Ovary (tissue), 10 donors: ENCODE measurements at regions of chr10 and their contacts with region 1.

Region 1: GRCh38 chr10:98242823-98243222 is 25.2 kb downstream of the LOXL4 start:
- DNase-seq: no peak
- H3K4me3 ChIP-seq: no peak overlapping the region
- H3K27ac ChIP-seq: no peak overlapping the region
- H3K4me1 ChIP-seq: no peaks in the 10 kb centered on the region
- H3K27me3 ChIP-seq: no peaks in the 10 kb centered on the region
- CTCF ChIP-seq: peak in 2 of 3 donors; percentile 15 to 31
- EP300 ChIP-seq: no peak
- POLR2A ChIP-seq: no peak

Region 2: GRCh38 chr10:98302741-98303365 is 60.0 kb after region 1 on chr10:
- intact Hi-C with region 1: loop called in 3 of 4 experiments (anchors 5 to 10 kb)
- DNase-seq: no peak
- H3K4me3 ChIP-seq: no peak overlapping the region
- H3K27ac ChIP-seq: no peak overlapping the region
- H3K4me1 ChIP-seq: no peaks in the 10 kb centered on the region
- H3K27me3 ChIP-seq: no peaks in the 10 kb centered on the region
- CTCF ChIP-seq: no peak
- EP300 ChIP-seq: no peak
- POLR2A ChIP-seq: no peak